ENCODE measurements at regions of chr3 and their contacts with region 1.

Region 1: GRCh38 chr3:189316242-189317019 is 144.7 kb downstream of the TPRG1 start:
- DNase-seq: peak; percentile 90 to 100
- H3K4me3 ChIP-seq: peak overlapping the region; percentile 1; the same call in 1 of the 2 replicates
- H3K27ac ChIP-seq: peak overlapping the region; percentile 89
- H3K4me1 ChIP-seq: peaks cover 31% of the 10 kb centered on the region
- H3K27me3 ChIP-seq: no peaks in the 10 kb centered on the region
- CTCF ChIP-seq: no peak

Region 2: GRCh38 chr3:189304446-189305351 is 11.7 kb before region 1 on chr3:
- CTCF ChIA-PET with region 1: no interaction called
- POLR2A ChIA-PET with region 1: interaction called, 15 read pairs
- intact Hi-C with region 1: loop called (anchors 1 kb)
- DNase-seq: peak; percentile 93 to 99
- H3K4me3 ChIP-seq: peak overlapping the region; percentile 27; the same call in 1 of the 2 replicates
- H3K27ac ChIP-seq: peak overlapping the region; percentile 85
- H3K4me1 ChIP-seq: peaks cover 44% of the 10 kb centered on the region
- H3K27me3 ChIP-seq: no peaks in the 10 kb centered on the region
- CTCF ChIP-seq: no peak

Region 3: DNA sequence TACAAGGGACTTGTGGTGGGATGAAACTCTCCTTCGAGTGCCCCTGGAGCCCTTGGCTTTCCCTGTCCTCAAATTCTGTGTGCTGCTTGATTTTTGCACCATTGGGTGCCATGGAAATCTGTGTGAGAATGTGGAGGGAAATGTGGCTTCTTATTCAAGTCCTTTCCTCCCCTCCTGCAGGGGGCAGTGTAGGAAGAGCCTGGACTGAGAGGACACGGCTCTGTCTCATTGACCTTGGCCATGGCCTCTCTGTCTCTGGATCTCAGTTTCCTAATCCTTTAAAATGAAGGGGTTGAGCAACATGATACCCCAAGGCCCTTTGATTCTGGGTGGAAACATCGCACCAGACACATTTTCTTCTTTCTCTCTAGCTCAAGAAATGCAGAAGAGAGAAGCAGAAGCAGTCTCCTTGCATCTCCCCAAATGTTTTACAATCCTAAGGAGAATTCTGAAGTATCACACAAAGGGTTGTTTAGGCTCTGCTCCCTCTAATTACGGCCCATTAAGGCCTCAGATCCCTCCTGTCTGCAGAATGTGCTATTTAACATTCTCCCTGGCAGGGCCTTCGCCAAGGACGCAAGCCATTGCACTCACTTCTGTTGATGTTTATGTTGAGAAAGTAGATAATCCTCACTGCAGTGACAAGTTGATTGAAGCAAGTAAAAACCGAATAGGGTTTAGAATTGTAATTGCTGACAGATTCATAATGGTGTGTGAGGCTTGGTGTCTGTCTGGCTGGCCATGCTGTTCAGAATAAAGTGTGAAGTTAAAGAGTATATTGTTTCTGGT is 24.4 kb after region 1 on chr3:
- CTCF ChIA-PET with region 1: no interaction called
- POLR2A ChIA-PET with region 1: interaction called, 4 read pairs
- intact Hi-C with region 1: loop called (anchors 1 kb)
- DNase-seq: peak in 1 of 2 experiments; percentile 29
- H3K4me3 ChIP-seq: no peak overlapping the region
- H3K27ac ChIP-seq: no peak overlapping the region
- H3K4me1 ChIP-seq: peaks cover 17% of the 10 kb centered on the region
- H3K27me3 ChIP-seq: no peaks in the 10 kb centered on the region
- CTCF ChIP-seq: no peak; the same call in 1 of the 2 replicates

Region 4: DNA sequence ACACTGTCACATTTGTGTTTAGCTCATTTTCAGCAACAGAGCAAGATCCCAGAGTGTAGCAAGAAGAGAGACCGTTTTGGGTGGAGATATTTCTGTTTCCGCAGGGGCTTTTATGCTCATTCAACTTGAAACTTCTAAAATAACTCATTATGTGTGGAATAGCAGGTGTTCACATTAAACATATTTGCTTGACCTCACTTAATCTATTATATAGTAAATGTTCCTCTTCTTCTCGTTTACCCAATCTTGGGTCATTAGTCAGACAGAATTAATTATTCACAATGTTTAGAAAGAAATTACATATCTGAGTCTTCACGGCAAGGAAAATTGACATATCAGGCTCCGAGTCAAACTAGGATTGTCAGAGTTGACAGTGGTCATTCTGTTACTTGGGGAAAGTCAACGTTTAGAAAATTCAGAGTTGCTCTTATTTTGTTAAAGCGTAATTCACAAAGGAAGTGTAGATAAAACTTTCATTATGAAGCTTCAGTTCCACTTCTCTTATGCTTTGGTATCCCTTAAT is 78.2 kb after region 1 on chr3:
- CTCF ChIA-PET with region 1: no interaction called
- POLR2A ChIA-PET with region 1: no interaction called
- intact Hi-C with region 1: loop called (anchors 2 kb)
- DNase-seq: no peak
- H3K4me3 ChIP-seq: no peak overlapping the region
- H3K27ac ChIP-seq: peak overlapping the region; percentile 89
- H3K4me1 ChIP-seq: peaks cover 36% of the 10 kb centered on the region
- H3K27me3 ChIP-seq: no peaks in the 10 kb centered on the region
- CTCF ChIP-seq: no peak

Region 5: DNA sequence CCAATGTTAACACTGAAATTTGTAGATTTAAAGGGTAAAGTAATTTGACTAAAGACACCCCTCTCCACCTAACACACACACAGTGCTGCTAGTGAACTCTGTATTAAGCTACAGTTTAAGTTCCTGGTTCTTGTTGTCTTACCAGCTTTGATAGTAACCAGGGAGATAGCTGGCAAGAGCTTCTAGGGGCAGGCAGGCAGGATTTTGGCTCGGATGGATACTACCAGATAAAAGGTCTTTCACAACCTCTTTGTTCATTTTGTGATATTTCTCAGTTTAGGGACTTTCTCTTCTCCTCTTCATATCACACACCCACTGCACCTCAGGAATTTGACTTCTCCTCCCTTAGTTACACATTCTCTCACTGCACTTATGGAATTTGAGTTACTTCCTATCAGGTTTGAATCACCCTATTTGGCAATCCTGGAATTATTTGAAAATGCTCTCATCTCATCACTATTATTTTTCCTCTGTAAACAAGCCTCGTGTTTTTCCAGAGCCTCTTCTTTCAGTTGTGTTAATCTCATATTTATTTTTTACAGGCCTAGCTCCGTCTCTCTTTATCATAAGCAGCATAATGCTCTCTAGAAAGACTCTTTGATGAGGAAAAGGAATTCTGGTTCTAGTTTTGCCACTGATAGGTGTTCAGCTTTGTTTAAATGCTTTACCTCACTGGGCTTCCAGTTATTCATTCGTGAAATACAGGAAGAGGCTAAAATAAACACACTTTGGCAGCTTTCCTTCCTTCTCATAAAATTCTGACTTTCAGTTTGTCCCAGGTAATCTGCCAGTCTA is 1028.8 kb after region 1 on chr3:
- CTCF ChIA-PET with region 1: no interaction called
- POLR2A ChIA-PET with region 1: no interaction called
- intact Hi-C with region 1: loop called (anchors 5 kb)
- DNase-seq: peak; percentile 79 to 100
- H3K4me3 ChIP-seq: peak overlapping the region; percentile 50; the same call in 1 of the 2 replicates
- H3K27ac ChIP-seq: peak overlapping the region; percentile 98
- H3K4me1 ChIP-seq: peaks cover 40% of the 10 kb centered on the region
- H3K27me3 ChIP-seq: no peaks in the 10 kb centered on the region
- CTCF ChIP-seq: no peak